GM18951 (cell line): ENCODE measurements at regions of chr4 and their contacts with region 1.

Region 1: DNA sequence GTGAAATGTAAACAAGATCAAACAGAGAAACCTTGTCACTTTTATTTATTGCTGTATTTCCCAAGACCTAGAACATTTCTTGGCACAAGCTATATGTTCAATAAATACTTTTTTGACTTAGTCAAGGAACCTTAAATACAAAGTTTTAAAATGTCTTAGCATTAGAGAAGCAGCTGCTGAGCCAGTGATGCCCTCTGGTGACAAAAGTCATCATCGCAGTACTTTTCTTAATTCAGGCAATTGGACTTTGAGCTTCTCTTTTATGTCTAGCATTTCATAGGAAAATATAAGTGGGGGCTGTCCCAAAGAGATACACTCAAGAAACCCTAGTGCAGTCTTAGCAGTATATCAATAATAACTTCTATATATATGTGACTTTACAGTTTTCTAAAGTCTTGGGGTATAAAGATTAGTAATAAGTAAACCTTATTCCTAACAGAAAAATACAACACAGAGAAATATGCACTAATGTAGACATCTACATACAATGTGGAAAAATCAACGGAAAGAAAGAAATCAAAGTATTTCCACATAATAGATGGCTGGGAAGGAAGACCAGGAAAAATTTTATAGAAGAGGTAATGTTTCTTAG is 118.4 kb downstream of the DTHD1 start:
- POLR2A ChIP-seq: no peak

Region 2: DNA sequence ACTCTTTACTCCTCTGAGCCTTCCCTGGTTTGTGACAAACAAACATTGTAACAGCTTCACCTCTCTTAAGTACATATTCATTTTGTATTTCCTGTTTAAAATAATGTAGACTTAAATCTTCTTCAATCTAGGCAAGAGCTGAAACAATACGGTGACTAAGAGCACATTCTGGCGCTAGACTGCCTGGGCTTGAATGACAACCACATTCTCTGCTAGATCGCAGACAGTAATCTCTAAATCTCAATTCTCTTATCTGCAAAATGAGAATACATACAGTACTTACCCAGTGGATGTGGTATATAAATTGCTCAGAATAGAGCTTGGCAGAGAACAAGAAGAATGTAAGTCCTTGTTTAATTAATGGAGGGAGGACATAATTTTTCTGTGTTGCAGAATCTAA is 300.3 kb before region 1 on chr4:
- in situ Hi-C with region 1: no loop called
- POLR2A ChIP-seq: no peak

Region 3: DNA sequence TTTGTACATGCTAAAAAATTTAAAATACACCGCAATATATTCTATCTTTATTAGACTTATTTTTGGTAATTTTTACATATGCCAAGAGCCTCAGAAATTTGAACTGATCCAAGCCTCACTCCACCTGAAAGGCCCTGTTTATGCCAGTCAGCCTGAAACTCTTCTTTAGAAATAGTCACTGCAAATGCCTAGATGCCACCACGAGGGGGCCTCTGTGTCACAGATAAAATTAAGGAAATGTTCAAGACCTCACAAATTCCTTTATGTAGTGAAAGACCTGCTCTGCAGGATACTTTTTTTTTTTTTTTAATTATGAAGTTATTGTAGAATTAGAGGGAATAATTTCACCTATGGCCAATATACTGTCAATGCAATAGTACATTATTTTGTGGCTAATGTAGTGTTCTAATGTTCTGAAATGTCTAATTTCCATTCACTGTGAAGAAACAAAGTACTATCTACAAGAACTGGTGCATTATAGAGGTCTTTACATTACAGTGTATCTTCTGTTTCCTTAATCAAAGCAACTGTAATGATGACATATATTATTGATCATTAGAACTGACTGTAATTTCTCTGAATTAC is 48.7 kb before region 1 on chr4:
- in situ Hi-C with region 1: loop called (anchors 5 kb)
- POLR2A ChIP-seq: no peak

Region 4: DNA sequence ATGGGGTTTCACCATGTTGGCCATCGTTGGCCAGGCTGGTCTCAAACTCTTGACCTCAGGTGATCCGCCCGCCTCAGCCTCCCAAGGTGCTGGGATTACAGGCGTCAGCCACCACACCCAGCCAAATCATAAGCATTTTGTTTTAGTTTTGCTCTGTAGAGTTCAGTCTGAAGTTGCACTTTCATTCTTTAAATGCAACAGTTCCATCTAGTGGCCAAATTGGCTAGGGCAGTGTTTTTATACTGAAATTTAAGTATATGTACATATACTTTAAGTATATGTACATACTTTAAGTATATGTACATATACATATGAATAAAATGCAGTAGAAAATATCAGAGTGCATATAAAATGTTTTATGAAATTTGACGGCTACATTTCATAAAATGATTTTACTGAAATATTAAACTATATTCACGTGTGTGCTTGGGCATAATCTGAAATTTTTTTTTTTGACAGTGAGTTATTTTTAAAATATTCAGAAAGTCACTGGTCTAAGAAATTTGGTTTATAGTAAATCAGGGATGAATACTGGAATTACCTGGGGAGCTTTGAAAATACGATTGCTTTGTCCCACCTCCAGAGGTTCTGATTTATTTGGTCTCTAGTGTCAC is 990.2 kb after region 1 on chr4:
- in situ Hi-C with region 1: loop called (anchors 25 kb)
- POLR2A ChIP-seq: no peak